ENCODE measurements at regions of chr11 and their contacts with region 1.

Region 1: GRCh38 chr11:82718307-82718706 is 15.4 kb downstream of the FAM181B start:
- DNase-seq: peak; percentile 42 to 61
- ATAC-seq: peak; percentile 75 to 89
- H3K4me3 ChIP-seq: no peak overlapping the region
- H3K27ac ChIP-seq: no peak overlapping the region
- H3K4me1 ChIP-seq: no peaks in the 10 kb centered on the region
- CTCF ChIP-seq: peak; percentile 86
- EP300 ChIP-seq: no peak
- POLR2A ChIP-seq: no peak
- RAD21 ChIP-seq: peak; percentile 85 to 89

Region 2: GRCh38 chr11:82671451-82671850 is 46.9 kb before region 1 on chr11:
- CTCF ChIA-PET with region 1: no interaction called
- POLR2A ChIA-PET with region 1: no interaction called
- DNase-seq: no peak
- ATAC-seq: no peak
- H3K4me3 ChIP-seq: no peak overlapping the region
- H3K27ac ChIP-seq: no peak overlapping the region
- H3K4me1 ChIP-seq: no peaks in the 10 kb centered on the region
- CTCF ChIP-seq: no peak
- EP300 ChIP-seq: no peak
- POLR2A ChIP-seq: no peak
- RAD21 ChIP-seq: no peak

Region 3: GRCh38 chr11:82733444-82734119 is 15.3 kb after region 1 on chr11 and contains the start of gene FAM181B:
- CTCF ChIA-PET with region 1: interaction called, 27 read pairs
- POLR2A ChIA-PET with region 1: no interaction called
- DNase-seq: peak; percentile 11 to 32
- ATAC-seq: peak; percentile 68 to 86
- H3K4me3 ChIP-seq: peak within 1 kb of the TSS; percentile 52
- H3K27ac ChIP-seq: peak within 1 kb of the TSS in 1 of 2 experiments; percentile 74; a peak in 4 of 6 replicates
- H3K4me1 ChIP-seq: no peaks in the 10 kb centered on the region
- CTCF ChIP-seq: no peak
- EP300 ChIP-seq: no peak
- POLR2A ChIP-seq: no peak
- RAD21 ChIP-seq: no peak
- polyA plus RNA-seq, gene FAM181B: not detected in 2 replicates

Region 4: DNA sequence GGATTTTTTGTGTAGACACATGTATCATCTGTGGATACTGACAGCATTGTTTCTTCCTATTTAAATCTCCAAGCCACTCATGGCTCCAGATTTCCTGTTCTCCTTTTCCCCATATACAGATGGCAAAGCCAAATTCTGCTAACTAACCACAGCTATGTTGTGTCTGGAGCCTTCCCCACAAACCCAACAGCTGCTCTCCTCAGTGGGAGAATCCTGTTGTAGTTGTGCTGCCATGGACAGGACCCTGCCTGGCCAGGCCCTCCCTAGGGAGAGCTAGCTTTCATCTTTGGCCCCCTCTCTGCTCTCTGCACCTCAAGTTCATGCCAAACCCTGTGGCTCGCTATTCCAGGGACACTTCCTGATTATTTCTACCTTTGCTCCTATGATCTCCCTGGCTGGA is 674.2 kb after region 1 on chr11:
- CTCF ChIA-PET with region 1: no interaction called
- POLR2A ChIA-PET with region 1: no interaction called
- DNase-seq: no peak
- ATAC-seq: no peak
- H3K4me3 ChIP-seq: no peak overlapping the region
- H3K27ac ChIP-seq: no peak overlapping the region
- H3K4me1 ChIP-seq: no peaks in the 10 kb centered on the region
- CTCF ChIP-seq: no peak
- EP300 ChIP-seq: no peak
- POLR2A ChIP-seq: no peak
- RAD21 ChIP-seq: no peak

Region 5: GRCh38 chr11:83819933-83820549 is 1101.7 kb after region 1 on chr11:
- CTCF ChIA-PET with region 1: interaction called, 20 read pairs
- POLR2A ChIA-PET with region 1: no interaction called
- DNase-seq: peak; percentile 41 to 57
- ATAC-seq: peak; percentile 64 to 87; a peak in 5 of 6 replicates
- H3K4me3 ChIP-seq: no peak overlapping the region
- H3K27ac ChIP-seq: no peak overlapping the region
- H3K4me1 ChIP-seq: no peaks in the 10 kb centered on the region
- CTCF ChIP-seq: peak; percentile 86
- EP300 ChIP-seq: no peak
- POLR2A ChIP-seq: no peak
- RAD21 ChIP-seq: peak; percentile 85 to 86

Measured in A549 (cell line).